ENCODE measurements at regions of chr3 and their contacts with region 1.

Region 1: DNA sequence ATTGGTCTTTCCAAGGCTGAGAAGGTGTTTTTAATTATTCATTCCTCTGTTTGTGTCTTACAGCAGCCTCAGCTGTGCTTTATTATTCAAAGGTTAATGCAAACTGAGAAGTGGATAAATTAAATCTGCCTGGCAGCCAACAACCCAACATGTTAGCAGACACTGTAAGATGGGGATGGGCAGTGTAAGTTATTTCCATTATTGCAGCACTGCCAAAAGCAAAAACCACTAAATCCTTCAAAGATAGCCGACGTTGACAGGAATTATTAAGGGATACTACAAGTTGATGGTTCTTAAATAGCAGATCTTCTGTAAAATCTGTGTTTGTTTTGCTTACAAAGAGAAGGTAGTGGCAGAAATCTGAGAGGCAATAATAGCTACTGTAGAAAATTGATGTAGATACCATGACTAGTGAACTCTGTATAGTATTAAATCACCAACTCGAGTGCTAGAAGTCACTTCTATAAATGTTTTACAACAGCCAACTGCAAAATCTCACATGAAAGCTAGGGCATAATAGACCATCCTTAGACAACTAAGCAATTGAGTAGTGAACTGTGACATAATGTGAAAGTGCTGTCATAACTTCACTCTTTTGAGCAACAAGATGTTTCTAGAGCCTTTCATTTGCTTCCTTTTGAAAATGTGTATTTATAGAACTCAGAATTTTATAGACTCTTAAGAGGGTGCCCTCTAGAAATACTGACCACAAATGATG is 278.6 kb downstream of the UBE2E2 start:
- DNase-seq: no peak

Region 2: GRCh38 chr3:23202921-23203707 is 278.6 kb before region 1 on chr3 and contains the start of gene UBE2E2:
- intact Hi-C with region 1: loop called (anchors 10 kb)
- DNase-seq: peak; percentile 51 to 96 (median 72)

Region 3: GRCh38 chr3:23435318-23435717 is 46.4 kb before region 1 on chr3:
- intact Hi-C with region 1: no loop called
- DNase-seq: no peak

Measured in posterior cingulate gyrus (tissue), 11 donors.